H1 (cell line): ENCODE measurements at regions of chr4 and their contacts with region 1.

Region 1: GRCh38 chr4:183602557-183603027 is 56.4 kb downstream of the RWDD4 start:
- DNase-seq: peak in 1 of 2 experiments; percentile 55
- H3K4me3 ChIP-seq: no peak overlapping the region
- H3K27ac ChIP-seq: no peak overlapping the region
- H3K4me1 ChIP-seq: 0 out of 7 replicates have a peak, but pooled peaks cover 0 to 2% (median 0%) of the 10 kb centered on the region in 4 experiments
- H3K27me3 ChIP-seq: no peaks in the 10 kb centered on the region
- CTCF ChIP-seq: peak in 2 of 3 experiments; percentile 8 to 19; a peak in 2 of 4 replicates
- EP300 ChIP-seq: no peak
- POLR2A ChIP-seq: no peak
- RAD21 ChIP-seq: peak; percentile 32 to 40; a peak in 3 of 4 replicates

Region 2: DNA sequence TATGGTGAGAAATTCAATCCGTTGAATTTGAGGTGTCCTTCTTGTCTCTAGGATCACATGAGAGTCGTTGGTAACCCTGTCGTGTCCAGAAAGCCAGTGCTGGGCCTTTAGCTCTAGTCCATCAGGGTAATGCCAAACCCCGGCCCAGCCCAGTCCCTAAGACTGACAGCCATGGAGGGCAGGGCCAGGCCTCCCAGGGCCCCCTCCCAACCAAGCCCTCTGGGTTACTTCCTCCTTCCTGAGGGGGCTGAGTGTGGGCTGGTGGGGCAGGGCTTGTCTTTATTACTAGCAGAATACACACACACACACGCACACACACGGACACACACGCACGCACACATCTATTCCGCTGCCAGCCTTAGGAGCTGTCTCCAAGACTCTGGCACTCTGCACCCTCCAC is 193.8 kb before region 1 on chr4:
- CTCF ChIA-PET with region 1: no interaction called
- POLR2A ChIA-PET with region 1: no interaction called
- DNase-seq: no peak
- H3K4me3 ChIP-seq: no peak overlapping the region
- H3K27ac ChIP-seq: no peak overlapping the region
- H3K4me1 ChIP-seq: no peaks in the 10 kb centered on the region
- H3K27me3 ChIP-seq: no peaks in the 10 kb centered on the region
- CTCF ChIP-seq: no peak
- EP300 ChIP-seq: no peak
- POLR2A ChIP-seq: no peak
- RAD21 ChIP-seq: no peak

Region 3: GRCh38 chr4:183471946-183472708 is 130.5 kb before region 1 on chr4:
- CTCF ChIA-PET with region 1: interaction called, 21 read pairs
- POLR2A ChIA-PET with region 1: interaction called, 4 read pairs
- DNase-seq: peak; percentile 27 to 94
- H3K4me3 ChIP-seq: no peak overlapping the region
- H3K27ac ChIP-seq: no peak overlapping the region
- H3K4me1 ChIP-seq: no peaks in the 10 kb centered on the region
- H3K27me3 ChIP-seq: no peaks in the 10 kb centered on the region
- CTCF ChIP-seq: peak; percentile 70 to 79 (median 73)
- EP300 ChIP-seq: no peak
- POLR2A ChIP-seq: no peak
- RAD21 ChIP-seq: peak; percentile 77 to 85

Region 4: GRCh38 chr4:183478123-183478522 is 124.5 kb before region 1 on chr4:
- CTCF ChIA-PET with region 1: interaction called, 17 read pairs
- POLR2A ChIA-PET with region 1: no interaction called
- DNase-seq: no peak
- H3K4me3 ChIP-seq: no peak overlapping the region
- H3K27ac ChIP-seq: no peak overlapping the region
- H3K4me1 ChIP-seq: no peaks in the 10 kb centered on the region
- H3K27me3 ChIP-seq: no peaks in the 10 kb centered on the region
- CTCF ChIP-seq: no peak
- EP300 ChIP-seq: no peak
- POLR2A ChIP-seq: no peak
- RAD21 ChIP-seq: no peak

Region 5: DNA sequence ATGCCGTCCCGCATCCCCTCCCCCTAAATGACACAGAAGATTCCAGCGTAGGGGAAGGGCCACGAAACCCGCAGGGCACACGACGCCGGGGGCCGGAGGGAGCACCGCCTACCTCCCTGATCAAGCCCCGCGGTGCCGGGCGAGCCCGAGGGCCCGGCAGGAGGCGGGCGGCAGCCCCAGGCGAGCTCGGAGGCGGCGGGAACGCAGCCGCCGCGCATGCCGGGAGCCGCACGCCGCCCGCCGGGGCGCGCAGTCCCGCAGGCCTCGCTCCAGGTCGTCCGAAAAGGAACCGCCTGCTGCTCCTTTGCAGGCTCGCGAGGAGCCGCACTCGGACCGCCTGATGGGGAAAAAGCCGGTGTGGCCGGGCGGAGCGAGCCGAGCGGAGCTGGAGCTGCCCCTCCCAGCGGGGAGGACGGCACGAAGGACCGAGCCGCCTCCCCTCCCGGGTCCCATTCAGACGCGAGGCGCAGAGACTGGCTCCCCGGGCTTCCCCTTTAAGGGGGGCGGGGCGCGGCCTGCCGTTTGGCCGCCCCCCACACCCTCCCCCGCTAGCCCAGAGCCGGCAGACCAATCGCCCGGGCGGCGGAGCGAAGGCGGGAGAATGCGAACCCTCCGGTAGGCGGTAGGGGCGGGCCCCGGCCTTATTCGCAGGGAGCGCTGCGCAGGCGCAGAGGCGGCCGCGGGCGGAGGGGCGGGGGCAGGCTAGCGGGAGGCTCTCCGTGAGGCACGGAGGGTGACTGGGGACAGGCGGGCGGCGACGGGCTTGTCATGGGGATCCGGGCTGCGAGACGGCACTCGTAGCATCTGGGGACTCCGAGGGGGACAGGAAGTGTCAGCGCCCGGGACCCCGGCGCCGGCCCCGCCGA is 98.3 kb before region 1 on chr4:
- CTCF ChIA-PET with region 1: interaction called, 10 read pairs
- POLR2A ChIA-PET with region 1: interaction called, 5 read pairs
- DNase-seq: peak; percentile 91 to 99
- H3K4me3 ChIP-seq: peak overlapping the region; percentile 73 to 100 (median 90)
- H3K27ac ChIP-seq: peak overlapping the region; percentile 95
- H3K4me1 ChIP-seq: peaks cover 0 to 5% (median 1%) of the 10 kb centered on the region in 4 experiments; a peak in 2 of 7 replicates
- H3K27me3 ChIP-seq: no peaks in the 10 kb centered on the region
- CTCF ChIP-seq: peak in 1 of 3 experiments; percentile 1; a peak in 1 of 4 replicates
- EP300 ChIP-seq: 0 out of 3 replicates have a peak, but pooled peaks of 1 of the 2 experiments have one; percentile 48
- POLR2A ChIP-seq: peak; percentile 77 to 83
- RAD21 ChIP-seq: peak; percentile 7 to 37; a peak in 3 of 4 replicates

Region 6: DNA sequence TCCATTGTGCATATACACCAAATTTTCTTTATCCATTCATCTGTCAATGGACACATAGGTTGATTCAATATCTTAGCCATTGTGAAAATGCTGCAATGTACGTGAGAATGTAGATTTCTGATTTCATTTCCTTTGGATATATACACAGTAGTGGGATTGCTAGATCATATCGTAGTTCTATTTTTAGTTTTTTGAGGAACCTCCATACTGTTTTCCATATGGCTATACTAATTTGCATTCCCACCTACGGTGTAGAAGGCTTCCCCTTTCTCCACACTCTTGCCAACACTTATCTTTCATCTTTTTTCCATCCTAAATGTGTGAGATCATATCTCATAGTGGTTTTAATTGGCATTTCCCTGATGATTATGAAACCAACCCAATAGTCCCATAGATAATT is 54.3 kb before region 1 on chr4:
- CTCF ChIA-PET with region 1: no interaction called
- POLR2A ChIA-PET with region 1: no interaction called
- DNase-seq: no peak
- H3K4me3 ChIP-seq: no peak overlapping the region
- H3K27ac ChIP-seq: no peak overlapping the region
- H3K4me1 ChIP-seq: no peaks in the 10 kb centered on the region
- H3K27me3 ChIP-seq: no peaks in the 10 kb centered on the region
- CTCF ChIP-seq: no peak
- EP300 ChIP-seq: no peak
- POLR2A ChIP-seq: no peak
- RAD21 ChIP-seq: no peak

Region 7: GRCh38 chr4:183571350-183571941 is 31.1 kb before region 1 on chr4:
- CTCF ChIA-PET with region 1: interaction called, 20 read pairs
- POLR2A ChIA-PET with region 1: no interaction called
- DNase-seq: no peak
- H3K4me3 ChIP-seq: no peak overlapping the region
- H3K27ac ChIP-seq: no peak overlapping the region
- H3K4me1 ChIP-seq: no peaks in the 10 kb centered on the region
- H3K27me3 ChIP-seq: no peaks in the 10 kb centered on the region
- CTCF ChIP-seq: no peak
- EP300 ChIP-seq: no peak
- POLR2A ChIP-seq: no peak
- RAD21 ChIP-seq: no peak

Region 8: GRCh38 chr4:183576701-183577404 is 25.7 kb before region 1 on chr4:
- CTCF ChIA-PET with region 1: interaction called, 20 read pairs
- POLR2A ChIA-PET with region 1: no interaction called
- DNase-seq: no peak
- H3K4me3 ChIP-seq: no peak overlapping the region
- H3K27ac ChIP-seq: no peak overlapping the region
- H3K4me1 ChIP-seq: no peaks in the 10 kb centered on the region
- H3K27me3 ChIP-seq: no peaks in the 10 kb centered on the region
- CTCF ChIP-seq: no peak
- EP300 ChIP-seq: no peak
- POLR2A ChIP-seq: no peak
- RAD21 ChIP-seq: no peak

Region 9: GRCh38 chr4:183588169-183588675 is 14.4 kb before region 1 on chr4:
- CTCF ChIA-PET with region 1: interaction called, 14 read pairs
- POLR2A ChIA-PET with region 1: no interaction called
- DNase-seq: no peak
- H3K4me3 ChIP-seq: no peak overlapping the region
- H3K27ac ChIP-seq: no peak overlapping the region
- H3K4me1 ChIP-seq: no peaks in the 10 kb centered on the region
- H3K27me3 ChIP-seq: no peaks in the 10 kb centered on the region
- CTCF ChIP-seq: no peak
- EP300 ChIP-seq: no peak
- POLR2A ChIP-seq: no peak
- RAD21 ChIP-seq: no peak

Region 10: DNA sequence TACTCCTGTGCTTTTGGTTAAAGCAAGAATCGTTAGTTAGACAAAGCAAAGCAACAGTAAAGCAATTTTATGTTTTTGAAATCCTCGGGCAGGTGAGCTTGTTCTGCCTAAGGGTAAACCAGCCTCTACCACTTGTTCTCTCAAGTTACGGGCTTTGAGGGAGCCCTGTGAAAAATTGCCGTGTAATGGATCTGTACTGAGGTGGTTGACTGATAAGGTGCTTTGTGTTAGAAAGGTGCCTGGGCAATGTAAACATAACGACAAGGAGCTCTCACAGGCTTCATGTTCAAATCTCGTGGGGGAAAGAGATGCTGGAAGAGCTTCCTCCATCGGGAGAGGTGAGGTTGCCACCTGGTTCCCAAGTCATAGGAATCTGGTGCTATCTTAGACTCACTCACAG is 168.3 kb after region 1 on chr4:
- CTCF ChIA-PET with region 1: no interaction called
- POLR2A ChIA-PET with region 1: no interaction called
- DNase-seq: no peak
- H3K4me3 ChIP-seq: no peak overlapping the region
- H3K27ac ChIP-seq: no peak overlapping the region
- H3K4me1 ChIP-seq: peaks cover 2 to 9% (median 5%) of the 10 kb centered on the region in 4 experiments
- H3K27me3 ChIP-seq: no peaks in the 10 kb centered on the region
- CTCF ChIP-seq: no peak
- EP300 ChIP-seq: no peak
- POLR2A ChIP-seq: no peak
- RAD21 ChIP-seq: no peak